AG04449 (cell line): ENCODE measurements at regions of chr3 and their contacts with region 1.

Region 1: DNA sequence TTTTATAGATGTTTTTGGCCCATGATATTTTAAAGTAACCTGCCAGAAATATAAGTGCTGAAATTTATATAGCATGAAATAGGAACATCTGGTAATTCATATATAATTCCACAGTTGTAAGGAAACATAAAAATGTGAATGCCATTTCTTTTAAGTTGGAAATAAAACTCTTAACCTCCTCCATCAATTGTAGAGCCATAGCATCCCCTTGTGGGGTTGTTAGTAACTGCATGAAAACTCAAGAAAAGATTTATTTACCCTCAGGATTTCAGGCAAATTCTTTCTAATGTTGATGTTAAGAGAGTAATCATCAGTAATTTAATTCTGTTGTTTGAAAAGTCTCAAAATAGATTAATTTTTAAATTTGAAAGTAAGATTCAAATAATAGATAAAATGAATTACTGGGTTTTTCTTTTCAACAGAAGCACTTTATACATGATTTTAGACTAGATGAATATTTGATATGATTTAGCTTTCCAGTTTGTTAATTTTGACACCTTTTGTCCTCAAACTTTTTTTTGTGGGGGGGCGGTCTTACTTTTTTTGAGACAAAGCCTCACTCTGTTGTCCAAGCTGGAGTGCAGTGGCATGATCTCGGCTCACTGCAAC is 74.7 kb downstream of the RASA2 start:
- DNase-seq: no peak
- H3K4me3 ChIP-seq: no peak overlapping the region
- CTCF ChIP-seq: peak; percentile 74

Region 2: GRCh38 chr3:141311496-141312353 is 249.8 kb before region 1 on chr3:
- CTCF ChIA-PET with region 1: interaction called, 266 read pairs
- POLR2A ChIA-PET with region 1: no interaction called
- DNase-seq: peak; percentile 88
- H3K4me3 ChIP-seq: peak overlapping the region; percentile 96
- CTCF ChIP-seq: peak; percentile 89

Region 3: GRCh38 chr3:141465221-141465620 is 96.3 kb before region 1 on chr3:
- CTCF ChIA-PET with region 1: interaction called, 517 read pairs
- POLR2A ChIA-PET with region 1: no interaction called
- DNase-seq: no peak
- H3K4me3 ChIP-seq: no peak overlapping the region
- CTCF ChIP-seq: peak; percentile 10

Region 4: DNA sequence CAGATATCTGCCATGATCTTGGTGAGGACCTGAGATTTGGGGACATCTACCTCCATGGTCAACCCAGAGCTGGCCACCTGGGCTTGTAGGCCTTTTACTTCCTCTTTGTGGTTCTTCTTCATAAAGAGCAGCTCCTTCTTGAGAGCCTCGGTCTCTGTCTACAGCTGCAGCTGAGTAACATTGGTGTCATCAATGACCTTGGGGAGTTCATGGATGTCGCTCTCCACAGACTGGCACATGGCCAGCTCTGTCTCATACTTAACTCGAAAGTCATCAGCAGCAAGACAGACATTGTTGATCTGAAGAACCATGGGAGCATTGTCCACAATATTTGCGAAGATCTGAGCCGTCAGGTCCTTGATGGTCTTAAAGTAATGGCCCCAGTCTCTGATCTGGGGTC is 90.4 kb before region 1 on chr3:
- CTCF ChIA-PET with region 1: interaction called, 17 read pairs
- POLR2A ChIA-PET with region 1: no interaction called
- DNase-seq: no peak
- H3K4me3 ChIP-seq: no peak overlapping the region
- CTCF ChIP-seq: no peak

Region 5: DNA sequence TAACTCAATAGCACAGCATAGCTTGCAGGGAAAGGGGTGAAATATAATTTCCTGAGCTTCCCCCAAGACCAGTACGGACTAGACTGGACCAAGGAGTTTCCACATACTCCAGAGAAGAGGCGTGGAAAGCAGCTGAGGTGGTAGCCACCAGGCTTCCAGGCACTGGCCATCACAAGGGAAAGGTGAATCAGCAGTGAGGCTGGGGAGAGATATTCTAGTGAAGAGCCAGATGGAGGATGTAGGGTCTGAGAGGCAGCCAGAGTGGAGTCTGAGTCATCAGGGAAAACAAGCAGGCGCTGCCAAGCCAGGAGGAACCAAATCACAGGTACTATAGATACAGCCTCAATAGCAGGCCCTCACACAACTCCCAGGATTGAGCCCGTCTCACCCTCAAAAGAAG is 84.3 kb before region 1 on chr3:
- CTCF ChIA-PET with region 1: interaction called, 17 read pairs
- POLR2A ChIA-PET with region 1: no interaction called
- DNase-seq: no peak
- H3K4me3 ChIP-seq: no peak overlapping the region
- CTCF ChIP-seq: no peak

Region 6: DNA sequence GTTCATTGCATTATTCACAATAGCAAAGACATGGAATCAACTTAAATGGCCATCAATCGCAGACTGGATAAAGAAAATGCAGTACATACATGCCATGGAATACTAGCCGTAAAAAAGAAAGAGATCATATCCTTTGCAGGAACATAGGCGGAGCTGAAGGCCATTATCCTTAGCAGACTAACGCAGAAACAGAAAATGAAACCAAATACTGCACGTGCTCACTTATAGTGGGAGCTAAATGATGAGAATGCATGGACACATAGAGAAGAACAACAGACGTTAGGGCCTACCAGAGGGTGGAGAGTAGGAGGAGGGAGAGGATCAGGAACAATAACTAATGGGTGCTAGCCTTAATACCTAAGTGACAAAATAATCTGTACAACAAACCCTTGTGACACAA is 16.8 kb before region 1 on chr3:
- CTCF ChIA-PET with region 1: interaction called, 14 read pairs
- POLR2A ChIA-PET with region 1: no interaction called
- DNase-seq: no peak
- H3K4me3 ChIP-seq: no peak overlapping the region
- CTCF ChIP-seq: no peak

Region 7: GRCh38 chr3:141643391-141643790 is 81.9 kb after region 1 on chr3:
- CTCF ChIA-PET with region 1: no interaction called
- POLR2A ChIA-PET with region 1: no interaction called
- DNase-seq: peak; percentile 67
- H3K4me3 ChIP-seq: no peak overlapping the region
- CTCF ChIP-seq: no peak